Ovary (tissue), 10 donors: ENCODE measurements at regions of chrX and their contacts with region 1.

Region 1: GRCh38 chrX:103533511-103534216 is 14.4 kb upstream of the RAB40A start:
- DNase-seq: peak; percentile 78 to 92 (median 87)
- H3K4me3 ChIP-seq: peak overlapping the region; percentile 7
- H3K27ac ChIP-seq: peak overlapping the region; percentile 55 to 64
- H3K4me1 ChIP-seq: peaks cover 11% of the 10 kb centered on the region
- H3K27me3 ChIP-seq: no peaks in the 10 kb centered on the region
- CTCF ChIP-seq: peak; percentile 18 to 84 (median 66)
- EP300 ChIP-seq: no peak
- POLR2A ChIP-seq: no peak

Region 2: DNA sequence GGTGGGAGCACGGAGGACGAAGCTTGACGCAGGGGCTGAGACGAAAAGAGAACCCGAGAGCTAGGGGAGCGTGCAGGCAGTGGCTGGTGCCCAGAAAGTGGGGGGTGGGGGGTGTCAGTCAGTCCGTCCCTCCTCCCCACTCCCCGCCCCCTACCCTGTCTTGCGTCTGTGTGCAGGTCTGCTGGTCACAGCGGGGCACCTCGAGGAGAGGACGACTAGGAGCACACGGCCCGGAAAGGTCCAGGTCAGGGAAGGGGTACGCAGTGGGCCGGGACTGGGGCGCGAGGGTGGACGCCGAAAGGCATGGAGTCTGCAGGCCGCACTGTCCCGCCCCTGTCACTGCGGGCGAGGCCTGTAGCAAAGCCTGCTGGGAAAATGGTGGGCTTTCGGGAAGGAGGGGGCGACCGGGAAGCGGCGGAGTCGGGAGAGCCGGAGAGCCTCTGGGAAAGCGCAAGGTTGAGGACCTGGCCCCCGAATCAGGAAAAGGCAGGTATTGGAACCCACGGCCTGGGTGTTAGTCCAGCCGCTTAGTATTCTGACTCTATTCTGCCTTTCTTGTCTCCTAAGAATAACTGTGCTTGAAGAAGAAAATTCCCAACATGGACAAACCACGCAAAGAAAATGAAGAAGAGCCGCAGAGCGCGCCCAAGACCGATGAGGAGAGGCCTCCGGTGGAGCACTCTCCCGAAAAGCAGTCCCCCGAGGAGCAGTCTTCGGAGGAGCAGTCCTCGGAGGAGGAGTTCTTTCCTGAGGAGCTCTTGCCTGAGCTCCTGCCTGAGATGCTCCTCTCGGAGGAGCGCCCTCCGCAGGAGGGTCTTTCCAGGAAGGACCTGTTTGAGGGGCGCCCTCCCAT is 95.9 kb after region 1 on chrX:
- intact Hi-C with region 1: loop called in 3 of 4 experiments (anchors 2 to 10 kb)
- DNase-seq: peak; percentile 76 to 84 (median 77)
- H3K4me3 ChIP-seq: peak overlapping the region; percentile 59
- H3K27ac ChIP-seq: peak overlapping the region; percentile 92 to 94
- H3K4me1 ChIP-seq: no peaks in the 10 kb centered on the region
- H3K27me3 ChIP-seq: no peaks in the 10 kb centered on the region
- CTCF ChIP-seq: peak; percentile 28 to 51 (median 31)
- EP300 ChIP-seq: no peak
- POLR2A ChIP-seq: peak; percentile 40

Region 3: GRCh38 chrX:103686199-103687072 is 152.8 kb after region 1 on chrX and contains the start of gene MORF4L2:
- intact Hi-C with region 1: loop called (anchors 5 to 10 kb)
- DNase-seq: peak; percentile 84 to 93 (median 87)
- H3K4me3 ChIP-seq: peak within 1 kb of the TSS; percentile 56
- H3K27ac ChIP-seq: peak within 1 kb of the TSS; percentile 91 to 92
- H3K4me1 ChIP-seq: no peaks in the 10 kb centered on the region
- H3K27me3 ChIP-seq: no peaks in the 10 kb centered on the region
- CTCF ChIP-seq: no peak
- EP300 ChIP-seq: peak; percentile 75
- POLR2A ChIP-seq: peak; percentile 89
- total RNA-seq, gene MORF4L2: 457 to 960 (median 603) TPM

Region 4: GRCh38 chrX:103817502-103817901 is 283.8 kb after region 1 on chrX:
- intact Hi-C with region 1: loop called in 3 of 4 experiments (anchors 5 to 10 kb)
- DNase-seq: no peak
- H3K4me3 ChIP-seq: no peak overlapping the region
- H3K27ac ChIP-seq: no peak overlapping the region
- H3K4me1 ChIP-seq: no peaks in the 10 kb centered on the region
- H3K27me3 ChIP-seq: no peaks in the 10 kb centered on the region
- CTCF ChIP-seq: peak; percentile 49 to 56 (median 49)
- EP300 ChIP-seq: no peak
- POLR2A ChIP-seq: no peak

Region 5: DNA sequence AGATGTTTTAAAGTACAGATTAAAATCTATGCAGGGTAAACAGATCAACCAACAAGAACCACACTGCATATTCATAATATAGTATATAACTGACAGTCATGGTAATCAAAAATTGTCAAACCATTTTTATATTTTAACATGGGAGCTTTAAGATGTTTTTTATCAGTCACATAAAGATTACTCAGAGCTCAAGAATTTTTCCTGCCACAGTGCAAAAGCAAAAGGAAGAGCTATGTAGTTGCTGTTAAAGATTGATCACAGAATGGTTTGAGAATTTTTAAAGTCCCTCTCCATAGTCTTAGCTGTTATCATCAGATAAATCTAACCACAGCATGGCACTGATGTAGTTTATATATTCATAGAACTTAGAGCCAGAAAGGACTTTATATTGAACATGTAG is 289.9 kb after region 1 on chrX:
- intact Hi-C with region 1: loop called in 3 of 4 experiments (anchors 5 to 10 kb)
- DNase-seq: no peak
- H3K4me3 ChIP-seq: no peak overlapping the region
- H3K27ac ChIP-seq: no peak overlapping the region
- H3K4me1 ChIP-seq: peaks cover 2% of the 10 kb centered on the region
- H3K27me3 ChIP-seq: no peaks in the 10 kb centered on the region
- CTCF ChIP-seq: no peak
- EP300 ChIP-seq: no peak
- POLR2A ChIP-seq: no peak